ENCODE measurements at regions of chr5 and their contacts with region 1.

Region 1: DNA sequence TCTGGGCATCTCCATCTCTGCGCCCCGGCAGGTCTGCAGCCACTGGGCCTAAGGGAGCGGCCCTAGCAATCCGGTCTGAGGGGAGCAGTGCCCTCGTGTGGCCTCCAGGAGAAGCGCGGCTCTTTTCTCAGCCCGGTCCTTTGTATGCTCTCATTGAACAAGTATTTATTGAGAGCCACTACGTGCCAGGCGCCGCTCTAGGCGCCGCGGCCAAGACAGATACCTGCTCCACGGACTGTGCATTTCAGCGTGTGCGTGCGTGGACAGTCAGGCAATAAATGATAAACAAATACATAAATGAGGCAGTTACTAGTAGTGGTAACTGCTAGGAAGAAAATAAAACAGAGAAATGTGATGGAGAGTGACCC is 2.3 kb upstream of the SLC4A9 start:
- DNase-seq: peak; percentile 80 to 96 (median 88)
- H3K4me3 ChIP-seq: no peak overlapping the region
- H3K27ac ChIP-seq: no peak overlapping the region
- H3K4me1 ChIP-seq: peaks cover 4 to 7% of the 10 kb centered on the region in 2 donors
- H3K27me3 ChIP-seq: no peaks in the 10 kb centered on the region
- CTCF ChIP-seq: peak; percentile 75 to 89 (median 86)
- POLR2A ChIP-seq: no peak

Region 2: DNA sequence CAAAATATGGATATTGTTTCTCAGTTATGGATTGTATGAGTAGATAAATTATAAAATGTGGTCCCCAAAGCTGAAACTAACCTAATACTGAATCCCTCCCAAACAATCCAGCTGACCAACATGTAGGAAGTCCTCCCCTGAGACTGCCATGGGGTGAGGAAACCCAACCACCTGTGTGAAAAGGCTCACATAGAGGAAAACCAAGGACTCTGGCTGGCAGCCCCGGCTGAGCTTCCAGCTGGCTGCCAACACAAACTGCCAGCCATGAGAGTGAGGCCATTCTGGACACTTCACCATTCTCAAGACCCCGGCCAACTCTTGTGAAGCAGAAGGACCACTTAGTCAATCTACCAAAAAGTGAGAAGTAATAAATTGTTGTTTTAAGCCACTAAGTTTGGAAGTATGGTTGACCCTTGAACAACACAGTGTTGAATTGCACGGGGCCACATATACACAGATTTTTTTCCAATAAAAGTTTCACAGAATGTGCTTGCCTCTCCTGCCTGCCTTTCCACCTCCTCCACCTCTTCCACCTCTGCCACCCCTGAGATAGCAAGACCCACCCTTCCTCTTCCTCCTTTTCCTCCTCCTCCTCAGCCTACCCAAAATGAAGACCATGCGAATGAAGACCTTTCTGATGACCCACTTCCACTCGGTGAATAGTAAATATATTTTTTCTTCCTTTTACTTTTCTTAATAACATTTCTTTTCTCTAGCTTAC is 299.3 kb before region 1 on chr5:
- intact Hi-C with region 1: no loop called
- DNase-seq: no peak
- H3K4me3 ChIP-seq: no peak overlapping the region
- H3K27ac ChIP-seq: no peak overlapping the region
- H3K4me1 ChIP-seq: peaks cover 8% of the 10 kb centered on the region in 2 donors
- H3K27me3 ChIP-seq: no peaks in the 10 kb centered on the region
- CTCF ChIP-seq: no peak
- POLR2A ChIP-seq: no peak

Region 3: DNA sequence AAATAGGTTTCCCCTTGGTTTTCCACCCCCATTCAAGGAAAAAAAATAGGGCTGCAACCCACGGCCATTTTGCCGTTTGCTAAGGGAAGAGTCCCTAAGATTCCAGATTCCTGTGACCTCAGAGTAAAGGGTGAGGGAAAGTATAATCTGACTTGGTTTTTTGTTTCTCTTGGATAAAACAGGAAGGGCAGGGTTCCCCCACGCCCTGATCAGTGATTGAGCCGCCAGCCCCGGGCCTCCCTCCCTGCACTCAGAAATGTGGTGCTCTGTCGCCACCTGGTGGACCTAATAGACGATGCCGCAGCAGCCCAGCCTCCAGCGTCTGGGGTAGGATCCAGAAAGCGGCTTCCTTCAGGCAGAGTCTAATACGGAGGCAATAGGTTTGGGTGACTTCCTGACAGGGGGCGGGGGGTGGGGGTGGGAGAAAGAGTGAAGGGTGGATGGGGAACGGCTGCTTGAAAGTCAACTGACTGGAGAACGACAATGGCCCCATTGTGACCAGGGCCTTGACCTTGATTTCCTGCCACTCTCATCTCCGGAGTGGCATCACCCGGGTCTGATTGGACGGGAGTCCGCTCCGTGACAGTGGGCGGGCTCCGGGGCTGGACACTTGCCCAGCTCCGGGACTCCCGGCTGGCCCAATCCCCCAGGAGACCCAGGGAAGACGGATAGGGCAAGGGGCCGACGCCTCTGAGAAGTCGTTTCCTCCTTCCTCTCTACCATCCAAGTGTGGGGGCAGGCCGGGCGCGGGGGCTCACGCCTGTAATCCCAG is 200.5 kb before region 1 on chr5:
- intact Hi-C with region 1: loop called in 1 of 2 experiments (anchors 10 kb)
- DNase-seq: peak; percentile 88 to 96 (median 91)
- H3K4me3 ChIP-seq: peak overlapping the region in 2 of 4 donors; percentile 22 to 56
- H3K27ac ChIP-seq: peak overlapping the region in 4 of 5 donors; percentile 29 to 83 (median 53)
- H3K4me1 ChIP-seq: peaks cover 0 to 8% of the 10 kb centered on the region in 2 donors
- H3K27me3 ChIP-seq: no peaks in the 10 kb centered on the region
- CTCF ChIP-seq: peak; percentile 82 to 98 (median 94)
- POLR2A ChIP-seq: no peak

Region 4: GRCh38 chr5:140169410-140169809 is 188.3 kb before region 1 on chr5:
- intact Hi-C with region 1: loop called in 1 of 2 experiments (anchors 5 kb)
- DNase-seq: peak in 1 of 7 donors; percentile 20
- H3K4me3 ChIP-seq: no peak overlapping the region
- H3K27ac ChIP-seq: no peak overlapping the region
- H3K4me1 ChIP-seq: peaks cover 13 to 16% of the 10 kb centered on the region in 2 donors
- H3K27me3 ChIP-seq: no peaks in the 10 kb centered on the region
- CTCF ChIP-seq: peak in 4 of 6 experiments; percentile 21 to 33 (median 27)
- POLR2A ChIP-seq: no peak

Region 5: DNA sequence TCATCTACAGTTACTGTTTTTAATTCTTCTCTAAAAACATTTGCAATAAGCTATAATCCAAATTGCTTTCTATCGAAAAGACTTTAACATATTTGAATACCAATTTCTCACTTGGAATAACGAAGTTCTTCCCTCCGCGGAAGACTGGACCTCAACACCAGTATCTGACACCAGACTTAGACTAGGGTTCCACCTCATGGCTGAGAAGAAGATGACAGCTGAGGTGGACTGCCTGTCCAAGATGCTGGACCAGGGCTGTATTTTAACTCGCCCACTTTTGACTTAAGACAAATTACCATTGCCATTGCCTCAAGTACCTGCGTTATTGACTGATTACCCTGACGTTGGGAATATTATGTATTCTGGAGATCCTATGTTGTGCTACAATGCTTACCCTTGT is 376.6 kb after region 1 on chr5:
- intact Hi-C with region 1: no loop called
- DNase-seq: no peak
- H3K4me3 ChIP-seq: no peak overlapping the region
- H3K27ac ChIP-seq: no peak overlapping the region
- H3K4me1 ChIP-seq: no peaks in the 10 kb centered on the region
- H3K27me3 ChIP-seq: peaks cover 2% of the 10 kb centered on the region
- CTCF ChIP-seq: peak in 3 of 6 experiments; percentile 11 to 27 (median 24)
- POLR2A ChIP-seq: no peak